Heart right ventricle (tissue), 16 donors: ENCODE measurements at regions of chr1 and their contacts with region 1.

Region 1: DNA sequence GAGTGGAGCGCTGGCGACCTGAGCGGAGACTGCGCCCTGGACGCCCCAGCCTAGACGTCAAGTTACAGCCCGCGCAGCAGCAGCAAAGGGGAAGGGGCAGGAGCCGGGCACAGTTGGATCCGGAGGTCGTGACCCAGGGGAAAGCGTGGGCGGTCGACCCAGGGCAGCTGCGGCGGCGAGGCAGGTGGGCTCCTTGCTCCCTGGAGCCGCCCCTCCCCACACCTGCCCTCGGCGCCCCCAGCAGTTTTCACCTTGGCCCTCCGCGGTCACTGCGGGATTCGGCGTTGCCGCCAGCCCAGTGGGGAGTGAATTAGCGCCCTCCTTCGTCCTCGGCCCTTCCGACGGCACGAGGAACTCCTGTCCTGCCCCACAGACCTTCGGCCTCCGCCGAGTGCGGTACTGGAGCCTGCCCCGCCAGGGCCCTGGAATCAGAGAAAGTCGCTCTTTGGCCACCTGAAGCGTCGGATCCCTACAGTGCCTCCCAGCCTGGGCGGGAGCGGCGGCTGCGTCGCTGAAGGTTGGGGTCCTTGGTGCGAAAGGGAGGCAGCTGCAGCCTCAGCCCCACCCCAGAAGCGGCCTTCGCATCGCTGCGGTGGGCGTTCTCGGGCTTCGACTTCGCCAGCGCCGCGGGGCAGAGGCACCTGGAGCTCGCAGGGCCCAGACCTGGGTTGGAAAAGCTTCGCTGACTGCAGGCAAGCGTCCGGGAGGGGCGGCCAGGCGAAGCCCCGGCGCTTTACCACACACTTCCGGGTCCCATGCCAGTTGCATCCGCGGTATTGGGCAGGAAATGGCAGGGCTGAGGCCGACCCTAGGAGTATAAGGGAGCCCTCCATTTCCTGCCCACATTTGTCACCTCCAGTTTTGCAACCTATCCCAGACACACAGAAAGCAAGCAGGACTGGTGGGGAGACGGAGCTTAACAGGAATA is 4.2 kb downstream of the TFAP2E start:
- DNase-seq: peak in 1 of 2 donors; percentile 51
- ATAC-seq: peak; percentile 22 to 70 (median 56)
- H3K4me3 ChIP-seq: peak overlapping the region; percentile 21 to 60 (median 50)
- H3K27ac ChIP-seq: peak overlapping the region in 1 of 10 donors; percentile 76
- H3K4me1 ChIP-seq: peaks cover 3 to 47% (median 20%) of the 10 kb centered on the region in 9 donors
- H3K27me3 ChIP-seq: peaks cover 27 to 67% (median 56%) of the 10 kb centered on the region in 7 donors
- CTCF ChIP-seq: no peak

Region 2: DNA sequence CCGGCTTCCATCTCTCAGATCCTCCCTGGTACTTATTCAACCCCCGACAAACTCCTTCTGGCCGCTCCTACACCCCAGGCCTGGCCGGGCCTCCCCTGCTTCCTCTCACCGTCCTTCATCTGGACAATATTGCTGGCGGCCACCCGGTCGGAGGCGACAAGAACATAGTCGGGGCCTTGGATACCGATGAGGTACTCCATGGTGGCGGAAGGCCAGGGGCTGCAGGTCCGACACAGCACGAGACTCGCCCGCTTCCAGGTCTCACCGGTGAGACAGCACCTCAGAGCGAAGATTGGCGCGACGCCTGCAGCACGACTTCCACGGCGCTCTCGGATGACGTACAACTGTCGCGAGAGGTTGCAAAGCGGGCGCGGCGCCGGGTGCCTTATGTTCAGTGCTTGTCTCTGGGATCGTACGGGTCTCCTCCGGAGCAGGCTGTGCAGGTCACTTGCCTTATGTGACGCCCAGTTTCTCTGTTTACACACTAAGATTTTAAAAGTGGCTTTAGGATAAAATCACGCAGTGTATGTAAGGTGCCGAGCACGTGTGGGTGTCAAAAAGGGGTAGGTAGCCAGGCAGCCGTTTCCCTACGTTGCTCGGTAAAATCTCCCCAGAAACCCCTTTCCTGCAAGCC is 64.0 kb after region 1 on chr1 and contains the start of gene PSMB2:
- intact Hi-C with region 1: loop called in 1 of 10 experiments (anchors 5 kb)
- DNase-seq: peak; percentile 95
- ATAC-seq: peak; percentile 97 to 99 (median 98)
- H3K4me3 ChIP-seq: peak within 1 kb of the TSS; percentile 65 to 95 (median 88)
- H3K27ac ChIP-seq: peak within 1 kb of the TSS; percentile 82 to 96 (median 88)
- H3K4me1 ChIP-seq: peaks cover 7 to 52% (median 45%) of the 10 kb centered on the region in 9 donors
- H3K27me3 ChIP-seq: peaks cover 0 to 29% (median 0%) of the 10 kb centered on the region in 7 donors
- CTCF ChIP-seq: no peak
- total RNA-seq, gene PSMB2: 34.1 to 55.0 (median 39.1) TPM

Region 3: DNA sequence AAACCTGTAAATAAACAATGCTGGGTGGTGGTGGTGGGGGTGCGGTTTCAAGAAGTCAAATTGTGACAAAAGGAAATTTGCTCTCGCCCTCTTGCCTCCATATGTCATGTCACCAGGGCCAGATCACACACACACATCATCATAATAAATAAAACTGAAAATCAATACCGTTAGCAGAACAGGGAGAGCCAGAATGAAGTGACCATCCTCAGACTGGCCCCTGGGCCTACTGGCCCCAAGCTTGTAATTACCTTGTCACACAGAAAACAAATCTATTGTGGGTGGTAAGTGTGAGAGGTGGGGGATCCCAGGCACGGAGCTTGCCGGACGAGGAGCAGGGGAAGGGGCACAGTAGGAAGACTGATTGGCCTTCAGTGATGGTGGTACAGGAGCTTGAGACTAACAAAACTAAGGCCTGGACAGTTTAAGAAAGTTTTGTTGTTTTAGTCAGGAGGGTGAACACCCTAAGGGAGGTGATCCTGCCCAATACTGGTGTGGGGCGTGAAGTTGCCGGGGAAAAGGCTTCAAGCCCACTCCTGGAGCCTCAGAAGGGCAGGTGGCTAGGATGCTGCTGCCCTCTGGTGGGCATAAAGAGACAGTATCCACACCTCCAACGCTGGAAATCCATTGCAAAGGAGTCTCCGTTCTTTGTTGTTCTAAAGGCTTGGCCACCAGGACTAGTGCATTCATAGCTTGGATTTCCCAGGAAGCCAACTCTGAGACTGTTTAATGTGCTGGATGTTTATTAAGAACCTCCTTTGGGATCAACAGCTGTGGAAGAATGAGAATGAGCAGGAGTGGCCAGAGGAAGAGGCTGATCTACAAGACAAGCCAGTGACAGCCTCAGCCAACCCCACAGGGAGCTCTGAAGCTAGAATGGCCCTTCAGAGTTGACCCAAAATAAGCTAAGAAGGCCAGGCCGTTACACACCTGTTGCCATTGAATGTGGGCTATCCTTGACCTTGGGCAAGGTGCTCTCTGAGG is 149.4 kb after region 1 on chr1:
- intact Hi-C with region 1: loop called in 1 of 10 experiments (anchors 5 kb)
- DNase-seq: peak; percentile 22 to 33
- ATAC-seq: peak; percentile 81 to 93 (median 88)
- H3K4me3 ChIP-seq: no peak overlapping the region
- H3K27ac ChIP-seq: no peak overlapping the region
- H3K4me1 ChIP-seq: no peaks in the 10 kb centered on the region
- H3K27me3 ChIP-seq: no peaks in the 10 kb centered on the region
- CTCF ChIP-seq: peak; percentile 81 to 91 (median 88)

Region 4: GRCh38 chr1:35769759-35770446 is 192.6 kb after region 1 on chr1 and contains the start of gene CLSPN:
- intact Hi-C with region 1: loop called in 2 of 10 experiments (anchors 5 to 10 kb)
- DNase-seq: peak; percentile 94 to 96
- ATAC-seq: peak; percentile 99 to 100 (median 99)
- H3K4me3 ChIP-seq: peak within 1 kb of the TSS; percentile 61 to 95 (median 76)
- H3K27ac ChIP-seq: peak within 1 kb of the TSS in 9 of 10 donors; percentile 67 to 86 (median 85)
- H3K4me1 ChIP-seq: peaks cover 0 to 14% (median 6%) of the 10 kb centered on the region in 9 donors
- H3K27me3 ChIP-seq: no peaks in the 10 kb centered on the region
- CTCF ChIP-seq: no peak
- total RNA-seq, gene CLSPN: 0.26 to 2.8 (median 0.43) TPM